HEK293T (cell line): ENCODE measurements at regions of chr10 and their contacts with region 1.

Region 1: DNA sequence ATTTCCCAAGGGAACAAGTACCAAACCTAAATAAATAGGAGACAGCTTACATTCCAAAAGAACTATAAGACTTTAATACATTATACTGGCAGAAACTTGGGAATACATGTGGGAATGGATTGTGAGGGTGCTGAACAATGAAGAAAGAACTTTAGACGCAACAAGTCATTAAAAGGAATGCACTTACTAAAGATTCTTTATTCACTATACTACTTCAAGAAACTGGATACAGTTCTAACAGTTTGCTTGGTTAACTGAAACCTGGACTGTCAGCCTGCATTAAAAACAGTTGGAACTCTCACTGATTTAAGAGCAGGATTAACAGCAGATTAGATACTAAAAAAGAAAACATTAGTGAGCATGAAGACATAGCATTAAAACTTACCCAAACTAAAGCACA is 12.0 kb downstream of the CACUL1 start:
- DNase-seq: no peak

Region 2: DNA sequence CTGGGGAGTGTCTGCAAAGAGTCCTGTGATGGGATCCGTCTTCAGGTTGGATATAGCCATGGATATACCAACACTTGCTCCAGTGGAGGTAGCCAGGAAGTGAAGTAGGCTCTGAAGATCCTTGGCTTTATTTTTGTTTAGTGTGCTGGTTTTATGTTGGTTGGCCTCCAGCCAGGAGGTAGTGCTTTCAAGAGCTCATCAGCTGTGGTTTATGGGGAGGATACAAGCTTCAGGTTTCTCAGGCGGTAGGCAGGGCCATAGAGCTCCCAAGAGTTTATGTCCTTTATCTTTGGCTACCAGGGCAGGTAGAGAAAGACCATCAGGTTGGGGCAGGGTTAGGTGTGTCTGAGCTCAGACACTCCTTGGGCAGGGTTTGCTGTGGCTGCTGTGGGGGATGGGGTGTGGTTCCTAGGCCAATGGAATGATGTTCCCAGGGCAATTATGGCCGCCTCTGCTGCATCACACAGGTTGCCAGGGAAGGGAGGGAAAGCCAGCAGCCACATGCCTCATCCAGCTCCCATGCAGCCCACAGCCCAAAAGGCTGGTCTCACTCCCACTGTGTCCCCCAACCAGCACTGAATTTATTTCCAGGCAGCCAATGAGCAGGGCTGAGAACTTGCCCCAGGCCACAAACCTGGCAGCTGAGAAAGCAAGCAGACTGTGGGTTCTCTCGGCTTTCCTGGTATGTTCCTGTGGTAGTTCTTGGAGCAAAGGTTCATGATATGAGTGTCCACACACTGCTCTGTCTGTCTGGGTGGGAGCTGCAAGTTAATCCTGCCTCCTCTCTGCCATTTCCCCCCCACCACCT is 80.3 kb before region 1 on chr10:
- CTCF ChIA-PET with region 1: no interaction called
- POLR2A ChIA-PET with region 1: no interaction called
- DNase-seq: no peak

Region 3: GRCh38 chr10:118754720-118755480 is 12.1 kb after region 1 on chr10 and contains the start of gene CACUL1:
- CTCF ChIA-PET with region 1: interaction called, 7 read pairs
- POLR2A ChIA-PET with region 1: interaction called, 42 read pairs
- DNase-seq: peak; percentile 100

Region 4: GRCh38 chr10:118768071-118768919 is 25.5 kb after region 1 on chr10:
- CTCF ChIA-PET with region 1: no interaction called
- POLR2A ChIA-PET with region 1: no interaction called
- DNase-seq: no peak